ENCODE measurements at regions of chr13 and their contacts with region 1.

Region 1: GRCh38 chr13:113458253-113459065 is 5.2 kb upstream of the ADPRHL1 start:
- DNase-seq: no peak
- ATAC-seq: peak; percentile 69
- H3K4me3 ChIP-seq: no peak overlapping the region
- H3K27ac ChIP-seq: no peak overlapping the region
- H3K4me1 ChIP-seq: no peaks in the 10 kb centered on the region
- H3K27me3 ChIP-seq: no peaks in the 10 kb centered on the region
- CTCF ChIP-seq: peak in 2 of 3 experiments; percentile 48 to 60; a peak in 4 of 6 replicates
- POLR2A ChIP-seq: no peak
- RAD21 ChIP-seq: no peak

Region 2: GRCh38 chr13:112434032-112434431 is 1024.4 kb before region 1 on chr13:
- CTCF ChIA-PET with region 1: no interaction called
- POLR2A ChIA-PET with region 1: no interaction called
- RAD21 ChIA-PET with region 1: no interaction called
- intact Hi-C with region 1: no loop called
- DNase-seq: no peak
- ATAC-seq: no peak
- H3K4me3 ChIP-seq: no peak overlapping the region
- H3K27ac ChIP-seq: no peak overlapping the region
- H3K4me1 ChIP-seq: no peaks in the 10 kb centered on the region
- H3K27me3 ChIP-seq: peaks cover 6% of the 10 kb centered on the region; the same call in 1 of the 2 replicates
- CTCF ChIP-seq: no peak
- POLR2A ChIP-seq: no peak
- RAD21 ChIP-seq: no peak

Region 3: GRCh38 chr13:112894673-112895481 is 563.6 kb before region 1 on chr13:
- CTCF ChIA-PET with region 1: no interaction called
- POLR2A ChIA-PET with region 1: no interaction called
- RAD21 ChIA-PET with region 1: no interaction called
- intact Hi-C with region 1: no loop called
- DNase-seq: no peak
- ATAC-seq: no peak; the same call in 1 of the 2 replicates
- H3K4me3 ChIP-seq: peak overlapping the region; percentile 60 to 66
- H3K27ac ChIP-seq: peak overlapping the region; percentile 59; the same call in 1 of the 2 replicates
- H3K4me1 ChIP-seq: peaks cover 6 to 14% of the 10 kb centered on the region in 2 experiments; a peak in 3 of 4 replicates
- H3K27me3 ChIP-seq: no peaks in the 10 kb centered on the region
- CTCF ChIP-seq: no peak
- POLR2A ChIP-seq: no peak
- RAD21 ChIP-seq: no peak

Region 4: DNA sequence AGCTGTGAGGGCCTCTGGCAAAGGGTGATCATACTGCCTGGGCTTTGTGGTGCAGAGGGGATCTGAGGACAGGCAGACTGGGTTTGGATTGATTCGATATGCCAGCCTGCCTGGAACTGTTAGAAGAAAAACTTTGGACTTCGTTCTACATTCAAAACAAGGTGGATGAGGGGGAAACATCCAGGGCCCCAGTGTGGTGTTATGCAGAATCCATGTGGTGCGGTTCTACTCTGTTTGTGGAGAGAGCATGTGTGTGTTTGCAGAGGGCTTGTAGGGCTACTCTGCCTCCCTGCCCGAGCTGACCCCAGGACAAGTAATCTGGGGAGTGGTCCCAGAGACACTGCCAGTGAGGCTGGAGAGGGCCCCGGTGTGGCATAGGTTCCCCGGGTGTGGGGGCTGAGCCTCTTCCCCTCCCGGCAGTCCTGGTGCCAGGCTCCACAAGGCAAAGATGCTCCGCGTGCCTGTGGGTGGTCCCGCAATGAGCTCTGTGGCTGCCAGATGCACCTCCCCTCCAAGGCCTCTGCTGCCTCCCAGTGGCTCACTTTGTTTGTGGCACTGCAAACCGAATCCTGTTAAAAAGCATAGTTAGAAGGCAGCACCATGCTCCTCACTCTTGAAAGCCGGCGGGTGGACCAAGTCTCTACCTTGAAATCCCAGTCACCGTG is 103.8 kb after region 1 on chr13:
- CTCF ChIA-PET with region 1: interaction called, 13 read pairs
- POLR2A ChIA-PET with region 1: no interaction called
- RAD21 ChIA-PET with region 1: no interaction called
- intact Hi-C with region 1: loop called (anchors 5 kb)
- DNase-seq: no peak
- ATAC-seq: peak; percentile 81
- H3K4me3 ChIP-seq: no peak overlapping the region
- H3K27ac ChIP-seq: no peak overlapping the region
- H3K4me1 ChIP-seq: peaks cover 0 to 7% of the 10 kb centered on the region in 2 experiments; a peak in 1 of 4 replicates
- H3K27me3 ChIP-seq: no peaks in the 10 kb centered on the region
- CTCF ChIP-seq: peak; percentile 61 to 71 (median 69); a peak in 5 of 6 replicates
- POLR2A ChIP-seq: no peak
- RAD21 ChIP-seq: peak; percentile 78